AG04449 (cell line): ENCODE measurements at regions of chr12 and their contacts with region 1.

Region 1: DNA sequence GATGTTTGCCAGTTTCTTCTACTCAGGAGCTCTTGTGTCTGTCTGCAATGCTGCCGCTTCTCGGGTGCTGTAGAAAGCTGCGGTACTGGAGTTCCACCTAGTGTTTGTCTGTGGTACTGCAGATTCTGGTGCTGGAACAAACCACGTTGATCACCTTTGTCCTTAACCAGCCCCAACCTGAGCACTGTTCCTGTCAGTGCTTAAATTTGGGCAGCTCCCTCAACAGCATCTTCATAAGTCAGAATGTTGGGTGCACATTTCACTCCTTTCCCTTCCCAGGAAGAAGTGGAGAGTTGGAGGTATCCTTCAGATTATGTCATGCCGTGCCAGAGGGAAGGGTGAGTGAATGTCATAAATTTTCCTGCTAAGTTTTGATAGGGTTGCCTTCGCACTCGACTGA is 48.7 kb upstream of the LALBA start:
- DNase-seq: no peak
- H3K4me3 ChIP-seq: no peak overlapping the region
- CTCF ChIP-seq: peak; percentile 92

Region 2: DNA sequence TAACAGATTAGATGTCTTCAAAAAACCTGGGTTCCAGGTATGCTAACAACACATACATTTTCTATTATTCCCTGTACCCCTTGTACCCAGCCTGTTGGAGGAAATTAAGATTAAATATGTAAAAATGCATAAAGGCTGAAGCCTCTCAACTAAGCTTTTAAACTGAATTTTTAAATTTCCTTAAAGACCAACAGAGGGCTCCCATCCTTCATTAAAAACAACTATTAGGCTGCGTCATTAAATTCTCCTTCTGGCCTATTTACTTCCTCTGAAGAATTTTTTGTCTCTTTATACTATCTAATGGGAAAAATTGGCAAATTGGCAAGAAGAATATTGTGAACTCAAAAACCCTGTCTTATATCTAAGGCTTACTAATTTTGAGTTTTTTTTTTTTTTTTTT is 534.5 kb before region 1 on chr12:
- CTCF ChIA-PET with region 1: interaction called, 12 read pairs
- POLR2A ChIA-PET with region 1: no interaction called
- DNase-seq: no peak
- H3K4me3 ChIP-seq: no peak overlapping the region
- CTCF ChIP-seq: no peak

Region 3: GRCh38 chr12:48542300-48542928 is 76.1 kb before region 1 on chr12:
- CTCF ChIA-PET with region 1: interaction called, 134 read pairs
- POLR2A ChIA-PET with region 1: no interaction called
- DNase-seq: no peak
- H3K4me3 ChIP-seq: no peak overlapping the region
- CTCF ChIP-seq: peak; percentile 56

Region 4: DNA sequence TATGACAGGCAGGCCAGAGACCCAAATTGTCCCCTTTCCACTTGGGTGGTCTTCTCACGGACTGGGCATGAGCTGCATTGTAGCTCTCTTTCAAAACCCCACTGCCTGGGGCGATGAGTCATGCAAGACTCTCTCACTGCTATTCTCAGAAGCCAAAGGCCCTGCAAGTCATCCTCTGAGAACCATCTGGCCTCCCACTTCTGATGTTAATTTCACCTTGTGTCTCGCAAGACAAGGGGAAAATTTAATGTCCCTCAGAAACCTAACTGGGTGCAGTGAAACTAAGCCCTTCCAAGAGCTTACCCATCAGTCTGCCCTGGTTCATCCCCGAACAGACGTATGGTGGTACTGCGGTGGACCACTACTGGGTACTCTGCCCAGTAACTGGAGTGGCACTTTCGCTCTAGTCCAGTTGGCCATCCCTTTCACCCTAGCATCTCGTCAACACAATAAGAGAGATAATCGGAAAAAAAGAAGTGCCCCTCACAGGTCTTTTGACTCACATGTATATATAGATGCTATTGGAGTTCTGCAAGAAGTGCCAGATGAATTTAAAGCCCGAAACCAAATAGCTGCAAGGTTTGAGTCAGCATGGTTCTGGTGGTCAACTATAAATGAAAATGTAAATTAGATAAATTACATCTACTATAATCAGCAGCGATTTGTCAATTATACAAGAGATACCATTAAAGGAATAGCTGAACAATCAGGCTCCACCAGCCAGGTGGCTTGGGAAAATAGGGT is 17.4 kb before region 1 on chr12:
- CTCF ChIA-PET with region 1: interaction called, 12 read pairs
- POLR2A ChIA-PET with region 1: no interaction called
- DNase-seq: peak; percentile 2
- H3K4me3 ChIP-seq: no peak overlapping the region
- CTCF ChIP-seq: no peak

Region 5: GRCh38 chr12:48631057-48631456 is 12.5 kb after region 1 on chr12:
- CTCF ChIA-PET with region 1: interaction called, 25 read pairs
- POLR2A ChIA-PET with region 1: no interaction called
- DNase-seq: no peak
- H3K4me3 ChIP-seq: no peak overlapping the region
- CTCF ChIP-seq: no peak